IMR-90 (cell line): ENCODE measurements at regions of chr10 and their contacts with region 1.

Region 1: GRCh38 chr10:128150045-128150493 is 23.8 kb upstream of the MKI67 start:
- DNase-seq: peak; percentile 51
- ATAC-seq: peak; percentile 98
- H3K4me3 ChIP-seq: peak overlapping the region; percentile 60
- H3K27ac ChIP-seq: no peak overlapping the region
- H3K4me1 ChIP-seq: peaks cover 2% of the 10 kb centered on the region
- H3K27me3 ChIP-seq: peaks cover 13% of the 10 kb centered on the region; the same call in 1 of the 2 replicates
- CTCF ChIP-seq: peak; percentile 97
- POLR2A ChIP-seq: no peak
- RAD21 ChIP-seq: peak; percentile 86

Region 2: DNA sequence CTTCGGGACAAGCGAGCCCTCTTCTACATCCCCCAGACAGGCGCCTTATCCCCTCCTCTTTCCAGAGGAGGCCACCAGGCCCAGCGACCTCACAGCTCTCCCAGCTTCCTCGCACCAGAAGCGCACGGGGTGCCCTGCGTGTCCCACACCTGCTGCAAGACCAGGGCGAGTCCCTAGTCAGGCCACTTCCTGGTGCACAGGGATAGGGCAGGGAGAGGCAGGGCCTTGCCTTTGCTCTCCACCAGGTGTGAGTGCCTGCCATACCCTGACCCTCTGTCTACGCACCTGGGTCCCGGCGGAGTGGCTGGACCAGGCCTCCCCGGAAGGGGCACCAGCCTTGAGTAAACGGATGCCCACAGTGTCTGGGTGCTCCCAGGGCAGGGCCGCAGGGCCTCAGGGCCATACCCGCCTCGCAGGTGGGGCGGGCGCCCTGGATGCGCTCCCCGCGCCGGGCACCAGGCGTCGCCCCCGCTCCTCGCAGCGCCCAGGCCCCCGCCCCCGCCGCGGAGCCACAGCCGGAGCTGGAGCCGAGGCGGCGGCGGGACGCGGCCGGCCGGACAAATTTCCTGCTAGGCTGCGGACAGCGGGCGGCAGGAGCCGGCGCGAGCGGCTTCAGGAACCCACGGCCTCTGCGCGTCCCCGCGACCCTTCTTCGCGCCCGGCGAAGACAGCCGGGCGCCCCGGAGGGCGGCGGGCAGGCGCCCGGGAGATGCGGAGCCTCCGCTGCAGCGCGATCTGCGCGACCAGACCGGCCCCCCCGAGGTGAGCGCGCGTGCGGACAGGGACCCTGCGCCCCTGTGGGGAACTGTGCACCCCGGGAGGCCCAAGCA is 243.3 kb before region 1 on chr10 and contains the start of gene PTPRE:
- CTCF ChIA-PET with region 1: no interaction called
- POLR2A ChIA-PET with region 1: no interaction called
- dilution Hi-C with region 1: no loop called
- in situ Hi-C with region 1: no loop called
- intact Hi-C with region 1: loop called (anchors 10 kb)
- DNase-seq: peak; percentile 24
- ATAC-seq: peak; percentile 94
- H3K4me3 ChIP-seq: peak within 1 kb of the TSS; percentile 42
- H3K27ac ChIP-seq: no peak within 1 kb of the TSS
- H3K4me1 ChIP-seq: peaks cover 4% of the 10 kb centered on the region; the same call in 1 of the 2 replicates
- H3K27me3 ChIP-seq: peaks cover 3% of the 10 kb centered on the region; the same call in 1 of the 2 replicates
- CTCF ChIP-seq: peak; percentile 70
- POLR2A ChIP-seq: no peak
- RAD21 ChIP-seq: peak; percentile 76
- total RNA-seq, gene PTPRE: 0.54 and 0.56 TPM in 2 replicates

Region 3: DNA sequence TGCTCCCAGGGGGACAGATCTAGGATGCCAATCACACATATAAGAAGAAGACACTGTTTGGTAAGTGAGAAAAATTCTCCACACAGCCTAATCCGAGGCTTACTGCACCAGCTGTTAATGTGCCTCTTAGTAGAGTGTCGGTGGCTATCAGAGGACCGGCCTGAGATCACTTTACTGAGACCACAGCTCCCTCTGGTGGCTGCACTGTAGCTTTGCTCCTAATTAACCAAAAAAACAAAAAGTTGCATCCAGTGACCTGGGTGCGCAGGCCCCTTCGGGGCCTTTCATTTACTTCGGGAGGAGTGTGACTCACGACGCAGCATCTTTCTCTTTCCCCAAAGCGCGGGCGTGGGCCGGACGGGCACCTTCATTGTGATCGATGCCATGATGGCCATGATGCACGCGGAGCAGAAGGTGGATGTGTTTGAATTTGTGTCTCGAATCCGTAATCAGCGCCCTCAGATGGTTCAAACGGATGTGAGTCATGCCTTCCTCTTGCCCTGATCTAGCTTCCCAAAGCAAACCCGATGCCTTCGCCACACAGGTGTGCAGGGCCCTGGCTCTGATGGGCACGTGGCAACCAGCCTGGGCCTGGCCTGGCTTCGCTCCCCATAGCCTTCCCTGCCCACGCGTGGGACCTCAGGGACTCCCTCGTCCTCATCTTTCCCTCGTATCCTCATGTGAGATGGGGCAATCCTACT is 80.6 kb before region 1 on chr10:
- CTCF ChIA-PET with region 1: interaction called, 3 read pairs
- POLR2A ChIA-PET with region 1: no interaction called
- dilution Hi-C with region 1: no loop called
- in situ Hi-C with region 1: loop called (anchors 5 kb)
- intact Hi-C with region 1: no loop called
- DNase-seq: peak; percentile 66
- ATAC-seq: peak; percentile 89
- H3K4me3 ChIP-seq: no peak overlapping the region
- H3K27ac ChIP-seq: no peak overlapping the region
- H3K4me1 ChIP-seq: peaks cover 3% of the 10 kb centered on the region
- H3K27me3 ChIP-seq: no peaks in the 10 kb centered on the region; the same call in 1 of the 2 replicates
- CTCF ChIP-seq: peak; percentile 89
- POLR2A ChIP-seq: no peak
- RAD21 ChIP-seq: peak; percentile 81

Region 4: DNA sequence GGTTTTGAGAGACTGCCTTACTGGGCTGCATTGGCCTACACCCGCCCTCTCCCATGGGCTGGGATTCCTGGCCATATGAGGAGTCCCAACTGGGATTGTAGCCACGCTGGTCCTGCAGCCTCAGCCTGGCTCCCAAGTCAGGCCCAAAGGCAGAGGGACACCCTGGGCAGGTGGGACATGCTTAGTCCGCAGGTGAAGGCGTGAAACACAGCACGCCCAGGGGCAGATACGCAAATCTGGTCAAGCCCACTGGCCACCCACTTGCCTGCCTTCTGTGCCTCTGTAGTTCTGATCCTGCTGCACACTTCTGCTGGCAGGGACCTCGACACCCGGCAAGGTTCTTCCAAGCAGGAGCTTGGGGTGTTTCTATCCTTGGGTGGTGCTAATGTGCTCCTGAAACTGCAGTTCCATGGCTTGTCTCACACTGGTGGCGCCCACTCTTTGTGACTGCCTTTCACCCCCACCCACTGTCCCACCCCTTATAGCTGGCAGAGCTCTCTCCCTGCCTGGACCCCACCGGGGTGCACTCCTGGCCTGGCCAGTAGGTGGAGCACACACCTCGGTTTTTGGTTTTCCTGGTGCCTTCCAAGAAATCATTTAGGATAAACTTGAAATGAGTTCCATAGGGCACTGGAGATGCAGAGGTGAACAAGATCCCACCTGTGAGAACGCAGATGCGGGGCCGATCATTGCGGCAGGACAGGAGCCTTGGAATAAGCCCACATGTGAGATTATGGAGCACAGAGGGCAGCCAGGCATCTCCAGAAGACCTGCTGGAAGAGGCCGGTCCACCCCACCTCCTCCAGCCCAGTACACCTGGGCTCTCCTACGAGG is 71.7 kb before region 1 on chr10:
- CTCF ChIA-PET with region 1: interaction called, 9 read pairs
- POLR2A ChIA-PET with region 1: no interaction called
- dilution Hi-C with region 1: no loop called
- in situ Hi-C with region 1: loop called (anchors 5 kb)
- intact Hi-C with region 1: loop called (anchors 1 kb)
- DNase-seq: peak; percentile 37
- ATAC-seq: peak; percentile 98
- H3K4me3 ChIP-seq: no peak overlapping the region
- H3K27ac ChIP-seq: no peak overlapping the region
- H3K4me1 ChIP-seq: no peaks in the 10 kb centered on the region
- H3K27me3 ChIP-seq: peaks cover 8% of the 10 kb centered on the region; the same call in 1 of the 2 replicates
- CTCF ChIP-seq: peak; percentile 86
- POLR2A ChIP-seq: no peak
- RAD21 ChIP-seq: peak; percentile 82

Region 5: DNA sequence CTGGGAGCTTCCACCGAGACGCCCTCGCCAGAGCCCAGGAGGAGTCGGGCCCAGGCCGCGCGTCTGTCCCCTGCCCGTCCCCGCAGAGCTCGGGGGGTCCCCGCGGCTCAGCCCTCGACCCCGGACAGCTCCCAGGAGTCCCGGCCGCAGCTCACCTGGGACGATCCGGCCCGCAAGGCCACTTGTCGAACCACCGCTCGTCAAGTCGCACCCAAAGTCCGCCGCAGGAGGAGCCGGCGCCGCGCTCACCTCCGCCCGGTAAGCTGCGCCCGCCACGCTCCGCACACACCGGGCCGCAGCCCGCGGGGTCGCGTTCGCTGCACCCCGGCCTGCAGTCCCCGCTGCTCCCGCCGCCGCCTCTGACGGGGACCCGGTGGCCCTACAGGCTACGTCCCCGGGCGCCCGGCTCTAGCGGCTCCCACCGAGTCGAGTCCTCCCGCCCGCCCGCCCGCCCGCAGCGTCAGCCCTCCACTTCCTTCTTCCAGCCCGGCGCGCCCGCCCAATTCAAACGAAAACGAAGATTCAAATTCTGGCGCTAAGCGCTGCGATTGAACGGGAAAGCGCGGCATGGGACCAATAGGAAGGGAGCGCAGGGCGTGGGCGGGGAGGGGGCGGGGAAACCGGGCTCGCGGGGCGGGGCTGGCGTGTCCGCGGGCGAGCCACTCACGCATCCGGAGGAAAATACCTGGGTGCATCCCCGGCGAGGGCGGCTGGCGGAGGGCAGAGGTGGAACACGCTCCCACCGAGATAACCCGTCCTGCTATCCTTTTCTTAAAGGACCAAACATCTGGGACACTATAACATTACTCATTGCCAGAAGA is 23.9 kb before region 1 on chr10 and contains the start of gene MKI67:
- CTCF ChIA-PET with region 1: no interaction called
- POLR2A ChIA-PET with region 1: no interaction called
- dilution Hi-C with region 1: no loop called
- in situ Hi-C with region 1: no loop called
- intact Hi-C with region 1: loop called (anchors 2 kb)
- DNase-seq: peak; percentile 83
- ATAC-seq: peak; percentile 91
- H3K4me3 ChIP-seq: peak within 1 kb of the TSS; percentile 87
- H3K27ac ChIP-seq: peak within 1 kb of the TSS; percentile 26; the same call in 1 of the 2 replicates
- H3K4me1 ChIP-seq: peaks cover 6% of the 10 kb centered on the region; the same call in 1 of the 2 replicates
- H3K27me3 ChIP-seq: no peaks in the 10 kb centered on the region
- CTCF ChIP-seq: no peak
- POLR2A ChIP-seq: no peak
- RAD21 ChIP-seq: no peak
- total RNA-seq, gene MKI67: 36.4 and 39.2 TPM in 2 replicates